ENCODE measurements at regions of chr3 and their contacts with region 1.

Region 1: GRCh38 chr3:47420511-47421484 is 40.0 kb downstream of the PTPN23 start:
- DNase-seq: peak; percentile 70
- ATAC-seq: peak; percentile 84
- H3K4me3 ChIP-seq: no peak overlapping the region
- H3K27ac ChIP-seq: peak overlapping the region; percentile 51
- H3K4me1 ChIP-seq: peaks cover 5 to 17% of the 10 kb centered on the region in 2 experiments; a peak in 2 of 4 replicates
- H3K27me3 ChIP-seq: no peaks in the 10 kb centered on the region
- CTCF ChIP-seq: peak; percentile 85 to 97 (median 95)
- POLR2A ChIP-seq: no peak
- RAD21 ChIP-seq: peak; percentile 86

Region 2: GRCh38 chr3:47475570-47476329 is 55.0 kb after region 1 on chr3 and contains the start of gene SCAP:
- CTCF ChIA-PET with region 1: interaction called, 14 read pairs
- POLR2A ChIA-PET with region 1: no interaction called
- RAD21 ChIA-PET with region 1: interaction called in 1 of 2 experiments, 3 read pairs
- intact Hi-C with region 1: loop called (anchors 1 kb)
- DNase-seq: peak; percentile 68
- ATAC-seq: peak; percentile 94
- H3K4me3 ChIP-seq: peak within 1 kb of the TSS; percentile 65 to 97
- H3K27ac ChIP-seq: peak within 1 kb of the TSS; percentile 63
- H3K4me1 ChIP-seq: peaks cover 2 to 24% of the 10 kb centered on the region in 2 experiments; a peak in 2 of 4 replicates
- H3K27me3 ChIP-seq: no peaks in the 10 kb centered on the region
- CTCF ChIP-seq: peak; percentile 78 to 84 (median 79); a peak in 5 of 6 replicates
- POLR2A ChIP-seq: peak; percentile 52
- RAD21 ChIP-seq: peak; percentile 65
- total RNA-seq, gene SCAP: 67.6 TPM

Region 3: DNA sequence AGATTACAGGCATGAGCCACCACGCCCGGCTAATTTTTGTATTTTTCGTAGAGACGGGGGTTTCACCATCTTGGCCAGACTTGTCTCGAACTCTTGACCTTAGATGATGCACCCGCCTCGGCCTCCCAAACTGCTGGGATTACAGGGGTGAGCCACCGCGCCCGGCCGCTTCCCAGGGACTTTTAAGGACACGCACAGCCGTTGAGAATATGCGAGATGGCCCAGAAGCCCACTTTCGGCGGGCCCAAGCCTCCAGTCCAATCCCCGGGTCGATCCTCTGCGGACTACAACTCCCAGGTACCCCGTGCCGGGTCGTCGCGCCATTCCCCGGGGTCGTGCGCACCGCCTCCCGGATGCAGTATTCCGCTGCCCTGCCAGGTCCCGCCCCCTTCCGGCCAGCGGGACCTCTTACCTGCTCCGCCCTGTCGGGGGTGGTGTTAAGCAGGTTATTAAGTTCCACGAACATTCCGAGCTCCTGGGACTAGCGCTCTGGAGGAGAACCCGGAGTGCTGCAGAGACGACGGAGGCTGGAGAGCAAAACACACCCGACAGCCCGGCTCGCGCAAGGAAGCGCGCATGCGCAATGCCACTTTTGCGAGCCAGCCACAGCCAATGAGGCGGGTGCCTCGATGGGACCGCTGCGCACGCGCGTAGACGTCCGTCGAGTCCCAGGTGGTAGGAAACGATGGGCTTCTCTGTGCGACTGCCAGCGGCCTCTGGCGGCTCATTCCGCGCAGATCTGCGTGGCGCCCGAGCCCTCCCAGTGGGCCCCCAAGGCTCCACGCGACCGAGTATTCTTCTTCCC is 92.5 kb after region 1 on chr3 and contains the start of gene ELP6:
- CTCF ChIA-PET with region 1: no interaction called
- POLR2A ChIA-PET with region 1: no interaction called
- RAD21 ChIA-PET with region 1: no interaction called
- intact Hi-C with region 1: loop called (anchors 1 kb)
- DNase-seq: peak; percentile 92
- ATAC-seq: peak; percentile 95
- H3K4me3 ChIP-seq: peak within 1 kb of the TSS; percentile 84 to 94
- H3K27ac ChIP-seq: peak within 1 kb of the TSS; percentile 86
- H3K4me1 ChIP-seq: peaks cover 2 to 20% of the 10 kb centered on the region in 2 experiments; a peak in 3 of 4 replicates
- H3K27me3 ChIP-seq: no peaks in the 10 kb centered on the region
- CTCF ChIP-seq: peak; percentile 40 to 60 (median 44); a peak in 5 of 6 replicates
- POLR2A ChIP-seq: peak; percentile 57
- RAD21 ChIP-seq: peak; percentile 50
- total RNA-seq, gene ELP6: 38.8 TPM

Region 4: DNA sequence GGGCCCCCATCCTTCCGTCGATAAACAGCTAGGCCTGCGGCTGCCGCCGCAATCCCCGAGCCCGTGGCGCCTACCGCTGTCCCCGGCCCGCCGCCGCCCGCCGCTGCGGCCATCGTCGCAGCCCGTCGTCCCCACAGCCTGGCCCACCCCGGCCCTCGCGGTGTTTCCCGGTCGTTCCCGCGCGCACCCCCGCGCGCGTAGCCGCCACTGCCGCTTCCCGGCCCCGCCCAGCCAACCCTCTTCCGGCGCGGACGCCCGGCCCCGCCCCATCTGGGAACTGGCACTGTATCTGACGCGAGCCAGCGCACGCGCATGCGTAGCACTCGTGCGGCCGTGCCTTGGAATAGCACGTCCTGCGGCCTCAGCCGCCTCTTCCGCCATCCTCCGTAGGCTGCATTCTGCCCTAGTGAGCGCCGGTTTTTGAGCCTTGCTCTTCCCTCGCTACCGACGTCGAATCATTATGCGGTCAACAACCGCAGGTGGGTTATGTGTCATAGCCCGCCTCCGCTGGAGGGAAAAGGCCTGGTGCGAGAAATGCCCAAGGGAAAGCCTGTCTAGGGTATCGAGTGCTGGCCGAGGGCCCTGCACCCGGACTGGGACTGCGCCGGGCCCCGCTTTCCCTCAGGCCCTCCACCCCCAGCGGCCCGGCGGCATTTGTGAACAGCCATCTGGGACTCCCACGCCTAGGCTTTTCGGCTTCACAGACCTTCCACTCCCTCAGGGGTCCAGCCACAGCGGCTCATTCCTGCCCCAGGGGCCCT is 361.1 kb after region 1 on chr3 and contains the start of gene SMARCC1:
- CTCF ChIA-PET with region 1: no interaction called
- POLR2A ChIA-PET with region 1: no interaction called
- RAD21 ChIA-PET with region 1: no interaction called
- intact Hi-C with region 1: loop called (anchors 5 kb)
- DNase-seq: peak; percentile 93
- ATAC-seq: peak; percentile 92
- H3K4me3 ChIP-seq: peak within 1 kb of the TSS; percentile 89 to 99
- H3K27ac ChIP-seq: peak within 1 kb of the TSS; percentile 97
- H3K4me1 ChIP-seq: peaks cover 11 to 18% of the 10 kb centered on the region in 2 experiments
- H3K27me3 ChIP-seq: no peaks in the 10 kb centered on the region
- CTCF ChIP-seq: no peak
- POLR2A ChIP-seq: peak; percentile 94
- RAD21 ChIP-seq: no peak
- total RNA-seq, gene SMARCC1: 168 TPM

Region 5: DNA sequence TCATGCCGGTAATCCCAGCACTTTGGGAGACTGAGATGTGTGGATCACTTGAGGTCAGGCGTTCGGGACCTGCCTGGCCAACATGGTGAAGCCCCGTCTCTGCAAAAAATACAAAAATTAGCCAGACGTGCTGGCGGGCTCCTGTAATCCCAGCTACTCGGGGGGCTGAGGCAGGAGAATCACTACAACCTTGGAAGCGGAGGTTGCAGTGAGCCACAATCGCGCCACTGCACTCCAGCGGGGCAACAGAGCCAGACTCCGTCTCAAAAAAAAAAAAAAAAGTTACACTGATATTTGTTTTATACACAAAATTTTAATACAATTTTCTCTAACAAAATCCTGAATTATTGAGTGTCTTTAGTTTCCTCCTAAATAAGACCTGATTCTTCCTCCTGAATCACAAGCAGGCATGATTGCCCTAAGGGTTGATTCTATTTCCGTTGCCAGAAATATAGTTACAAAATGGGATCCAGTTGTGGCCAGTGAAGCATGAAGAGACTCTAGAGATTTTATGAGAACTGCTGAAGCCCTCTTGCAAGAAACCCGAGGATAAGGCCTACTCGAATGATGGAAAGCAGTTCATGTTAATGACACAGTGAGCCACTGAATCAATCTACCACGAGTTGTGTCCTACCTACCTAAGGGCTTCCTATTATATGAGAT is 370.5 kb after region 1 on chr3:
- CTCF ChIA-PET with region 1: interaction called, 15 read pairs
- POLR2A ChIA-PET with region 1: no interaction called
- RAD21 ChIA-PET with region 1: interaction called, 4 to 6 read pairs
- intact Hi-C with region 1: loop called (anchors 5 kb)
- DNase-seq: no peak
- ATAC-seq: no peak
- H3K4me3 ChIP-seq: no peak overlapping the region
- H3K27ac ChIP-seq: no peak overlapping the region
- H3K4me1 ChIP-seq: peaks cover 8 to 19% of the 10 kb centered on the region in 2 experiments
- H3K27me3 ChIP-seq: no peaks in the 10 kb centered on the region
- CTCF ChIP-seq: no peak
- POLR2A ChIP-seq: no peak
- RAD21 ChIP-seq: no peak